PC-9 (cell line): ENCODE measurements at regions of chr4 and their contacts with region 1.

Region 1: GRCh38 chr4:186725469-186726425 is 2.1 kb upstream of the FAT1 start:
- DNase-seq: peak; percentile 45 to 79
- H3K4me3 ChIP-seq: peak overlapping the region; percentile 98
- H3K27ac ChIP-seq: peak overlapping the region; percentile 57
- H3K4me1 ChIP-seq: peaks cover 40% of the 10 kb centered on the region
- H3K27me3 ChIP-seq: no peaks in the 10 kb centered on the region
- CTCF ChIP-seq: peak; percentile 77

Region 2: DNA sequence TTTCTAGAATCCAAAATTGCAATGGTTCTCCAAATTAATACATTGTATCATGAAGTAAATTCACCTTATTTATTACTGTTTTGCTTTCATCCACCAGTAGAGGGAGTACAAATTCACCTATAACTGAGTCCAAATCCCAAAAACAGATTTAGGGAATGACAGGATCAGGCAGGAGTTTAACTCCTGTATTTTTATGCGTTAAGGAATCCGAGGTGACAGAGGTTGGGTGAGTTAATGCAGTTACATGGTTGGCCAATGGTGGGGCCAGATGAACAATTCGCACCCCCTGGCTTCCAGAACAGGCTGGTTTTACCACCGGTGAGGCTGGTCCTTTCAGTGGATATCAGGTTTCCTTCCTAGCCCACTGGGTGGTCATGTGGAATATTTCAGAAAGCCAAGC is 252.8 kb before region 1 on chr4:
- CTCF ChIA-PET with region 1: no interaction called
- POLR2A ChIA-PET with region 1: no interaction called
- intact Hi-C with region 1: loop called (anchors 10 kb)
- DNase-seq: no peak
- H3K4me3 ChIP-seq: no peak overlapping the region
- H3K27ac ChIP-seq: no peak overlapping the region
- H3K4me1 ChIP-seq: no peaks in the 10 kb centered on the region
- H3K27me3 ChIP-seq: no peaks in the 10 kb centered on the region
- CTCF ChIP-seq: peak; percentile 62

Region 3: DNA sequence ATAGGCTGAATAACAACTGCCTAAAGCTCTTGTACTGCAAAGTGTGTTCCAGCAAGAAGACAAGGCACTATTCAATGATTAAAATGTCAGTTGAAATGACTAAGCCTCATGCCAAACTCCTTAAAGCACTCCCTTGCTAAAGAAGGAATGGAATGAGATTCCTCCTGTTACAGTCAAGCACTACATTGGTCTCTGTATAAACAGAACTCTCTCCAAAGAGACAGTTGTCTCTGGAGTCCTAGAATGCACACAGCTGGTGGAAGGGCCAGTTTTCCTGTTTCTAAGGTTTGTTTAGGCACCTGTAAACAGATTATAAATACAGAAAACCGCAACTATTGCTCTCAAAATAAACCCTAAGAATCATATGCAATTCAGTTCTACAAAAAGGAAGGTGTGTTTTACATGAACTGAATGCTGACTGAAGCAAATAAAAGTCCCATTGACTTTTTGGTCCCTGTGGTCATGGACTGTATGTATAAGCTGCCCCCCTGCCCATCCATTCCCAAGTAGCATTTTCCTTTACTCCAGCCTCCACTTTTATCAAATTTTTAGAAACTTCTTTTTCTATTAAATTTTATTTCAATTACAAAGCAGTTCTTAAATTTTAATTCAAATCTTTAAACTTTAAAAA is 49.1 kb before region 1 on chr4:
- CTCF ChIA-PET with region 1: no interaction called
- POLR2A ChIA-PET with region 1: interaction called, 4 read pairs
- intact Hi-C with region 1: loop called (anchors 2 kb)
- DNase-seq: peak; percentile 45 to 72
- H3K4me3 ChIP-seq: no peak overlapping the region
- H3K27ac ChIP-seq: no peak overlapping the region
- H3K4me1 ChIP-seq: no peaks in the 10 kb centered on the region
- H3K27me3 ChIP-seq: no peaks in the 10 kb centered on the region
- CTCF ChIP-seq: no peak

Region 4: DNA sequence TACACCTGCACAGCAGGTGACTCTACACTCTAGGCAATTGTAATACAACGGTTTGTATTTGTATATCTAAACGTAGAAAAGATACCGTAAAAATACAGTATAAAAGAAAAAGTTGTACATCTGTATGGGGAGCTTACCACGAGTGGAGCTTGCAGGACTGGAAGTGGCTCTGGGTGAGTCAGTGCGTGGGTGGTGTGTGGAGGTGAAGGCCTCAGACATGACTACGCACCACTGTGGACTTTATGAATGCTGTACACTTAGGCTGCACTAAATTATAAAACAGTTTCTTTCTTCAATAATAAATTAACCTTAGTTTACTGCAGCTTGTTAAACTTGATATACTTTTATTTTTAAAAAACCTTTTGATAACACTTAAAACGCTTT is 82.9 kb after region 1 on chr4:
- CTCF ChIA-PET with region 1: no interaction called
- POLR2A ChIA-PET with region 1: no interaction called
- intact Hi-C with region 1: no loop called
- DNase-seq: no peak
- H3K4me3 ChIP-seq: no peak overlapping the region
- H3K27ac ChIP-seq: no peak overlapping the region
- H3K4me1 ChIP-seq: no peaks in the 10 kb centered on the region
- H3K27me3 ChIP-seq: no peaks in the 10 kb centered on the region
- CTCF ChIP-seq: no peak

Region 5: DNA sequence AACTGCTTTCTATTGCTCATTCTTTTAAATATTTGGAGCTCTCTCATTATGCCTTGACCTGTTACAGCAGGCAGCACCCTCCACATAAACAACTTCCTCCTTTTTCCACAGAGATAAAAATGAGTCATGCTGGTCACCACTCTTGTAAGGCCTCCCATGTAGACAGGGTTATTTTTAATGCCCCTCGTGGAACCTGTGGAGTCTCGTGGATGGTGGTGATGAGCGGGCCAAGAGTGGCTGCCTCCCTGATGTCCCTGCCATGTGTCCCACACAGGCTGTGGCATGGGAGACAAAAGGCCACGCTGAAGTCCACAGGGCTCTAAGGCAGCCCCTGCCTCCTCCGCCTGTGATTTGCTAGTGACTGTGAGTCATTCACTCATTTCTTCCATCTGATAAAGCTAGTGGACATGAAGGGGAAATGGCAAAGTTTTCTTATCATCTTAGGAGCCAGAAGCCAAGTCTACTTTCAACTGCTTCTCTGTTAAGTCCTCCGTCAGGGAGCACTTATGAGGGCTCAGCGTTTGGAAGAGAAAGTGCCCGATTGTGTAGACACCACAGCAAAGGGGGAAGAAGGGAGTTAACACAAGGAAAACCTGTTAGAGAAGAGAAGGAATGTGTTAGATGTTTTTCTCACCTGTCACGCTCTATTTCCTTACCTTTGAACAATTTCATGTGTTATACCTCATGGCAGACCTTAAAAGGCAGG is 119.5 kb after region 1 on chr4:
- CTCF ChIA-PET with region 1: no interaction called
- POLR2A ChIA-PET with region 1: interaction called, 4 read pairs
- intact Hi-C with region 1: loop called (anchors 1 kb)
- DNase-seq: peak; percentile 53 to 74
- H3K4me3 ChIP-seq: no peak overlapping the region
- H3K27ac ChIP-seq: peak overlapping the region; percentile 49
- H3K4me1 ChIP-seq: peaks cover 20% of the 10 kb centered on the region
- H3K27me3 ChIP-seq: no peaks in the 10 kb centered on the region
- CTCF ChIP-seq: no peak

Region 6: GRCh38 chr4:187084701-187085100 is 359.0 kb after region 1 on chr4:
- CTCF ChIA-PET with region 1: no interaction called
- POLR2A ChIA-PET with region 1: no interaction called
- intact Hi-C with region 1: loop called (anchors 10 kb)
- DNase-seq: no peak
- H3K4me3 ChIP-seq: no peak overlapping the region
- H3K27ac ChIP-seq: no peak overlapping the region
- H3K4me1 ChIP-seq: no peaks in the 10 kb centered on the region
- H3K27me3 ChIP-seq: no peaks in the 10 kb centered on the region
- CTCF ChIP-seq: no peak

Region 7: GRCh38 chr4:187317799-187318198 is 592.1 kb after region 1 on chr4:
- CTCF ChIA-PET with region 1: no interaction called
- POLR2A ChIA-PET with region 1: no interaction called
- intact Hi-C with region 1: loop called (anchors 10 kb)
- DNase-seq: no peak
- H3K4me3 ChIP-seq: no peak overlapping the region
- H3K27ac ChIP-seq: no peak overlapping the region
- H3K4me1 ChIP-seq: no peaks in the 10 kb centered on the region
- H3K27me3 ChIP-seq: no peaks in the 10 kb centered on the region
- CTCF ChIP-seq: no peak